ENCODE measurements at regions of chr16 and their contacts with region 1.

Region 1: DNA sequence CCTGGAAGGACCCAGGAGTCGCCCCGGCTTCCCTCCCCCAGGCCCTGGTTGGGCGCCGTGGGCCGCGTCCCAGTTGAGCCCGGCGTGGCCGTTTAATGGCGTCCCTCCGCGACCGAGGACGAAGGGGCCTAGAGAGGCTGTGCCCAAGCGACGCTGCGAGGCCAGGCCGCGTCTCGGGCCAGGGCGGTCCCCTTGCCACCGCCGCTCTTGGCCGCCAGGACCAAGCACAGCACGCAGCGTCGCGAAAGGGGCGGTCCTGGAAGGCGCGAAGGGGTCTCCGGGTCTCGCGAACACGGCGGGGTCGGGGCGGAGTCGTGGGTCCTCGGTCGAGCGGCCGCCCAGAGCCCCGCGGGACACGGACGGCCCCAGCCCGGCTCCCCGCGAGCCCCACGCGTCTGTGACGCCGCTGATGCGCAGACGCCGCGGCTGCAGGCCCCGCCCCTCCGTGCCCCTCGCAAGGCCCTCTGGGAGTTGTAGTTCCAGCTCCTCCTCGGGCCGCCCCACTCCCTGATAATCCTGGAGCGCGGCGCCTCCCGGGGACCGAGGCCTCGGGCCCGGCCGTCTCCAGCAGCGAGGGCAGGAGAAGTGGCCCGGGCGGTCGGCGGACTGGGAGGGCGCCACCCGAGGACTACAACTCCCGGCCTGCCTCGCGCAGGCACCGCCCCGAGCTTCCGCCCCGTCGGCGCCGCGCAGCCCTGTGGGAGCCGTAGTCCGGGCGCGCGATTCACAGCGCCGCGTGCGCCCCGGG is at the start of gene CAPN15:
- DNase-seq: peak; percentile 71 to 93 (median 81)
- ATAC-seq: peak; percentile 81
- H3K4me3 ChIP-seq: peak within 1 kb of the TSS; percentile 80 to 91
- H3K4me3 Mint-ChIP-seq: peak within 1 kb of the TSS; percentile 86
- H3K27ac ChIP-seq: peak within 1 kb of the TSS; percentile 73 to 92
- H3K27ac Mint-ChIP-seq: peak within 1 kb of the TSS; percentile 88
- H3K4me1 ChIP-seq: peaks cover 35% of the 10 kb centered on the region
- H3K4me1 Mint-ChIP-seq: peaks cover 31% of the 10 kb centered on the region
- H3K27me3 ChIP-seq: no peaks in the 10 kb centered on the region
- H3K27me3 Mint-ChIP-seq: no peaks in the 10 kb centered on the region
- CTCF ChIP-seq: no peak
- total RNA-seq, gene CAPN15: 40.5 to 43.6 TPM

Region 2: DNA sequence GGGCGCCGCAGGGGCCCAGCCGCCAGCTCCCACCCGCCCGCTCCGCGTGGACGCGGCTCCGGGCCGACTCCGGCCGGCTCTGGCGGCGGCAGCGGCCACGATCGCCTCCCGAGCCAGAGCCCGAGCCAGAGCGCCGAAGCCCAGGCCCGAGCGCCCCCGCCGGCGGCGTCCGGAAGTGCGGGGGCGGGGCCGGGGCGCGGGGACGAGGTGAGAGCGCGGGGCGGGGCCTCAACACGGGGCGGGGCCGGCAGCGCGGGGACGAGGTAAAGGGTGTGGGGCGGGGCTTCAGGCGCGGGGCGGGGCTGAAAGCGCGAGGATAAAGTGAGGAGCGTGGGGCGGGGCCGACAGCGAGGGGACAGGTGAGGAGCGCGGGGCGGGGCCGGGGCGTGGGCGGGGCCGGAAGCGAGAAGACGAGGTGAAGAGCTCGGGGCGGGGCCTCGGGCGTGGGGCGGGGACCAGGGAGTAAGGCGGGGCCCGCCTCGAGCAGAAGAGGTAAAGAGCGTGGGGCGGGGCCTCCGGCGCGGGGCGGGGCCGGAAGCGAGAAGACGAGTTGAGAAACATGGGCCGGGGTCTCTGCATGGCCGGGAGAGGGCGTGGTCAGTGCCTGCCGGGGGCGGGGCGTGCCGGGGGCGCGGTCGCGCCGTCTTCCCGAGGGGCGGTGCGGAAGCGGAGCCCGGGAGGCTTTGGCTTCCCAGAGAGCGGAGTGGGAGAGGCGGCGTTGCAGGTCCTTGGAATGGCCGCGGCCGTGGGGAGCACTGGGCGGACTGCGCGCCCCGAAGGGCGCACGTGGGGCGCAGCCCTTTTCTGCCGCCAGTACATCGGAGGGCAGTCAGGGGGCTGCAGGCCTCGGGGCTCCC is 174.4 kb before region 1 on chr16 and contains the start of gene AXIN1:
- CTCF ChIA-PET with region 1: no interaction called
- POLR2A ChIA-PET with region 1: no interaction called
- intact Hi-C with region 1: no loop called
- DNase-seq: peak; percentile 97 to 100 (median 100)
- ATAC-seq: peak; percentile 87
- H3K4me3 ChIP-seq: peak within 1 kb of the TSS; percentile 53 to 58
- H3K4me3 Mint-ChIP-seq: peak within 1 kb of the TSS; percentile 91
- H3K27ac ChIP-seq: peak within 1 kb of the TSS; percentile 47 to 69
- H3K27ac Mint-ChIP-seq: peak within 1 kb of the TSS; percentile 89
- H3K4me1 ChIP-seq: peaks cover 61% of the 10 kb centered on the region
- H3K4me1 Mint-ChIP-seq: peaks cover 62% of the 10 kb centered on the region
- H3K27me3 ChIP-seq: no peaks in the 10 kb centered on the region
- H3K27me3 Mint-ChIP-seq: no peaks in the 10 kb centered on the region
- CTCF ChIP-seq: peak; percentile 17
- total RNA-seq, gene AXIN1: 25.4 to 28.6 TPM

Region 3: GRCh38 chr16:381789-382717 is 145.1 kb before region 1 on chr16 and contains the start of gene PGAP6:
- CTCF ChIA-PET with region 1: no interaction called
- POLR2A ChIA-PET with region 1: no interaction called
- intact Hi-C with region 1: loop called (anchors 1 to 5 kb)
- DNase-seq: peak in 8 of 9 experiments; percentile 50 to 85 (median 70)
- ATAC-seq: peak; percentile 57
- H3K4me3 ChIP-seq: peak within 1 kb of the TSS; percentile 63 to 74
- H3K4me3 Mint-ChIP-seq: peak within 1 kb of the TSS; percentile 93
- H3K27ac ChIP-seq: peak within 1 kb of the TSS in 1 of 2 experiments; percentile 68
- H3K27ac Mint-ChIP-seq: peak within 1 kb of the TSS; percentile 86
- H3K4me1 ChIP-seq: peaks cover 34% of the 10 kb centered on the region
- H3K4me1 Mint-ChIP-seq: peaks cover 29% of the 10 kb centered on the region
- H3K27me3 ChIP-seq: no peaks in the 10 kb centered on the region
- H3K27me3 Mint-ChIP-seq: no peaks in the 10 kb centered on the region
- CTCF ChIP-seq: no peak
- total RNA-seq, gene PGAP6: 57.9 to 60.8 TPM

Region 4: GRCh38 chr16:569445-570254 is 42.5 kb after region 1 on chr16 and contains the start of gene PIGQ:
- CTCF ChIA-PET with region 1: interaction called, 4 read pairs
- POLR2A ChIA-PET with region 1: no interaction called
- intact Hi-C with region 1: loop called (anchors 1 kb)
- DNase-seq: peak; percentile 40 to 81 (median 59)
- ATAC-seq: peak; percentile 77
- H3K4me3 ChIP-seq: peak within 1 kb of the TSS; percentile 66 to 84
- H3K4me3 Mint-ChIP-seq: peak within 1 kb of the TSS; percentile 83
- H3K27ac ChIP-seq: peak within 1 kb of the TSS; percentile 65 to 82
- H3K27ac Mint-ChIP-seq: peak within 1 kb of the TSS; percentile 89
- H3K4me1 ChIP-seq: peaks cover 44% of the 10 kb centered on the region
- H3K4me1 Mint-ChIP-seq: peaks cover 32% of the 10 kb centered on the region
- H3K27me3 ChIP-seq: no peaks in the 10 kb centered on the region
- H3K27me3 Mint-ChIP-seq: no peaks in the 10 kb centered on the region
- CTCF ChIP-seq: no peak
- total RNA-seq, gene PIGQ: 25.9 to 31.0 TPM

Region 5: GRCh38 chr16:636206-637080 is 109.3 kb after region 1 on chr16 and contains the start of gene METTL26:
- CTCF ChIA-PET with region 1: no interaction called
- POLR2A ChIA-PET with region 1: interaction called, 3 read pairs
- intact Hi-C with region 1: loop called in 1 of 2 experiments (anchors 1 kb)
- DNase-seq: peak; percentile 84 to 97 (median 94)
- ATAC-seq: peak; percentile 81
- H3K4me3 ChIP-seq: peak within 1 kb of the TSS; percentile 77 to 97
- H3K4me3 Mint-ChIP-seq: peak within 1 kb of the TSS; percentile 98
- H3K27ac ChIP-seq: peak within 1 kb of the TSS; percentile 56 to 91
- H3K27ac Mint-ChIP-seq: peak within 1 kb of the TSS; percentile 96
- H3K4me1 ChIP-seq: peaks cover 22% of the 10 kb centered on the region
- H3K4me1 Mint-ChIP-seq: peaks cover 10% of the 10 kb centered on the region
- H3K27me3 ChIP-seq: no peaks in the 10 kb centered on the region
- H3K27me3 Mint-ChIP-seq: no peaks in the 10 kb centered on the region
- CTCF ChIP-seq: no peak
- total RNA-seq, gene METTL26: 37.4 to 43.1 TPM

Region 6: GRCh38 chr16:740764-741505 is 213.8 kb after region 1 on chr16 and contains the start of gene CIAO3:
- CTCF ChIA-PET with region 1: no interaction called
- POLR2A ChIA-PET with region 1: no interaction called
- intact Hi-C with region 1: loop called in 1 of 2 experiments (anchors 1 kb)
- DNase-seq: peak; percentile 80 to 98 (median 93)
- ATAC-seq: peak; percentile 96
- H3K4me3 ChIP-seq: peak within 1 kb of the TSS; percentile 85 to 90
- H3K4me3 Mint-ChIP-seq: peak within 1 kb of the TSS; percentile 82
- H3K27ac ChIP-seq: peak within 1 kb of the TSS; percentile 74 to 78
- H3K27ac Mint-ChIP-seq: peak within 1 kb of the TSS; percentile 57
- H3K4me1 ChIP-seq: peaks cover 9% of the 10 kb centered on the region
- H3K4me1 Mint-ChIP-seq: peaks cover 8% of the 10 kb centered on the region
- H3K27me3 ChIP-seq: no peaks in the 10 kb centered on the region
- H3K27me3 Mint-ChIP-seq: no peaks in the 10 kb centered on the region
- CTCF ChIP-seq: peak; percentile 93
- total RNA-seq, gene CIAO3: 25.7 to 30.0 TPM

Measured in CD8-positive, alpha-beta T cell (primary cell).